Activated T-helper 2 cell treated with anti-CD3 and anti-CD28 coated beads, Interferon-gamma antibody, Interleukin-2, Interleukin-4, amounts not matched to agents 10 μg/mL and 5 μg/mL and 100 μg/mL, durations not matched to agents 14 hours and 24 hours and 36 hours (primary cell): ENCODE measurements at regions of chr17 and their contacts with region 1.

Region 1: DNA sequence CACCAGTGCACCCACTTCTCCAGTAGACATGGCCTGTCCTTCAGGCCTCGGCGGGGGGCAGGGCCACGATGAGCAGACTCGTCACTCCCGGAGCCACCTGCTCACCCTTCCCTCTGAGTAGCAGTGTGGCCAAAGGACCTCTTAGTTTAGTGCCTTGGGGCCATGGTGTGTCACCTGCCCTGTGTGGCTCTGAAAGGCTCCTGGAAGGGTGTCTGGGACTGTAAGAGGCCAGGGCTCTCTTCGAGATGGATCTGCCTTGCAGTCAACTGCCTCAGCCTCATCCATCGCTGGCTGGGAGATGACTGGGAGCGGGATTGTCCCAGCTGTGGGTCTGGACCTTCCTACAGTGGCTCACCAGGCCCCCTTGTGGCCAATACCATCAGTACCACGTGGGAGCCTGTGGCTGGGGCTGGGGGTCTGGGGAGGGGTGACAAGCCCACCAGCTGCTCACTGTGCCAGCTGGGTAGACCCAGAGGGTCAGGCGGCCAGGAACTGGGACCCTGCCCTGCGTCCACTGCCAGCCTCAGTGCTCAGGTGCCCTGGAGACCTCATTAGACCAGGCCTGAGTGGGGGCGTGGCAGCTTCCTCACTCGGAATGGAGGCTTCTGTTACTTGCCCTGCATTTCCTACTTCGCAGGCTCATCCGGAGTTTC is 133.4 kb downstream of the OR1D5 start:
- DNase-seq: no peak
- H3K4me3 Mint-ChIP-seq: no peak overlapping the region
- H3K27ac Mint-ChIP-seq: no peak overlapping the region
- H3K4me1 Mint-ChIP-seq: no peaks in the 10 kb centered on the region
- H3K27me3 Mint-ChIP-seq: no peaks in the 10 kb centered on the region

Region 2: DNA sequence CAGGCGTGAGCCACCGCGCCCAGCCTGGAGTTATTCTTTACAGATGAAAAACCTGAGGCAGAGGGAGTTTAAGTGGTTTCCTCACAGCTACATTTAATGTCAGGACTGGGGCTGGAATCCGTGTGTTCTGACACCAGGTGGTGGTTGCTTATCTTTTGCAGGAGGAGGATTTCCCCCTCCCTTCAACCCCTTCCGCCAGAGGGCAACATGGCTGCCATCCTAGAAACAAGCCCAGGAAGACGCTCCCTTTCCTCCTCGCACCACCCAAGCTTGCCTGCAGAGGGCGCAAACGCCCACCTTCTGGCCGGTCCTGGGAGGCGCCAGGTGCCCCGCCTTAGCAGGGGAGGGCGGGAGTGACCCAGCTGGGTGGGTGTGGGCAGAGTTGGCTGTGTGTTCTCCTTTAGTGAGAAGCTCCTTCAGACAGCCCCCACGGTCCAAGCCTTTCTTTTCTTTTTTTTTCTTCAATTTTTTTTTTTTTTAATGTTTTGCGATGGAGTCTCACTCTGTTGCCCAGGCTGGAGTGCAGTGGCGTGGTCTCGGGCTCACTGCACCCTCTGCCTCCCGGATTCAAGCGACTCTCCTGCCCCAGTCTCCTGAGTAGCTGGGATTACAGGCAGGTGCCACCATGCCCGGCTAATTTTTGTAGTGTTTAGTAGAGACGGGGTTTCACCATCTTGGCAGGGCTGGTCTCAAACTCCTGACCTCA is 143.7 kb before region 1 on chr17:
- intact Hi-C with region 1: loop called (anchors 2 kb)
- DNase-seq: peak; percentile 90
- H3K4me3 Mint-ChIP-seq: no peak overlapping the region
- H3K27ac Mint-ChIP-seq: no peak overlapping the region
- H3K4me1 Mint-ChIP-seq: peaks cover 13% of the 10 kb centered on the region
- H3K27me3 Mint-ChIP-seq: peaks cover 19% of the 10 kb centered on the region

Region 3: GRCh38 chr17:2828397-2829038 is 101.5 kb before region 1 on chr17:
- intact Hi-C with region 1: loop called (anchors 2 kb)
- DNase-seq: peak; percentile 67
- H3K4me3 Mint-ChIP-seq: no peak overlapping the region
- H3K27ac Mint-ChIP-seq: no peak overlapping the region
- H3K4me1 Mint-ChIP-seq: peaks cover 15% of the 10 kb centered on the region
- H3K27me3 Mint-ChIP-seq: peaks cover 8% of the 10 kb centered on the region

Region 4: DNA sequence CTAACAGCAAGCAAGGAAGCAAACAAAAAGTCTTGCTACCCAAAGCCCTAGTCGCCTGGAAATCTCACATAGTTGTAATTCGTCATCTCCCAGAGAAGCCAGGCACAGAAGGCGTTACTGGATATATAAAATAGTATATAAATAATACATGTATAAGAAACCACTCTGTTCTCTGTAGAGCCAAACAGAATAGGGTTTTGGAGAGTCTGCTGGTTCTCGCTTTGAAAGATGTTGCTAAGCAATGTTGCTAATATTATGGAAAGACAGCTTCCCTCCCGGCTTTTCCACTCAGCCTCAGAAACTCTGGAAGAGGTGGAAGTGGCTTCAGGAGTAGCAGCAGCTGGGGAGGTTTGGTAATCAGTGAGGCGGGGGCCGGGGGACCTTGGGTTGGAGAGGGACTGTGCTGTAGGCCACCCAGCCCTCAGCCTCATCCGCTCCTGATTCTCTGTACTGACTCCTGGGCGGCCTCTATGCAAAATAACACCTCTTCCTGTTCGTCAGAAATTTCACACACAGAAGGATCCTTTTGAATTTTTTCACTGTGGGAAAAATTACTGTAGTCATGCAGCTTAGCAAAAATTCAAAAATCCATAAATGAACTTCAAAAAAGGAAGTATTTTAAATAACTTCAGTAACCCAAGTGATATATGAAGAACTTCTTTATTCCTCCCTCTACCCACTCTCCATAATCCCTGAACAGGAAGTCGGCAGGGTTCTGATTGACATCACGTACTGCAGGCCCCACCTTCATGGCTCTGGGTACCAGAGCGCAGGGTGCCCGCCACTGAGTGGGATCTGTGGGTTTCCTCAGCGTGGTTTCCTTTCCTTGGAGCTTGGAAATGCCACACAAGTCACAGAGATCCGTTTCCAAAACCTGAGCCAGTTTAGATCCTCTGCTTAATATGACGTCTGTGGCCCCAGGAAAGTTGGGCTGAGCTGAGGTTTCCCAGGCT is 82.3 kb before region 1 on chr17:
- intact Hi-C with region 1: loop called (anchors 2 kb)
- DNase-seq: no peak
- H3K4me3 Mint-ChIP-seq: no peak overlapping the region
- H3K27ac Mint-ChIP-seq: no peak overlapping the region
- H3K4me1 Mint-ChIP-seq: peaks cover 12% of the 10 kb centered on the region
- H3K27me3 Mint-ChIP-seq: peaks cover 18% of the 10 kb centered on the region